ENCODE measurements at regions of chr5 and their contacts with region 1.

Region 1: GRCh38 chr5:178626484-178627258 is at the start of gene CLK4:
- DNase-seq: peak; percentile 94 to 96 (median 96)
- H3K4me3 ChIP-seq: peak within 1 kb of the TSS; percentile 63 to 97 (median 74)
- H3K4me3 Mint-ChIP-seq: peak within 1 kb of the TSS; percentile 98
- H3K27ac ChIP-seq: peak within 1 kb of the TSS; percentile 95 to 98
- H3K27ac Mint-ChIP-seq: peak within 1 kb of the TSS; percentile 97 to 99 (median 98)
- H3K4me1 ChIP-seq: peaks cover 23 to 27% of the 10 kb centered on the region in 2 donors
- H3K4me1 Mint-ChIP-seq: peaks cover 27% of the 10 kb centered on the region
- H3K27me3 ChIP-seq: no peaks in the 10 kb centered on the region
- H3K27me3 Mint-ChIP-seq: peaks cover 0 to 4% (median 3%) of the 10 kb centered on the region in 3 donors
- CTCF ChIP-seq: no peak
- polyA plus RNA-seq, gene CLK4: 3.0 to 46.9 (median 4.9) TPM

Region 2: GRCh38 chr5:178385496-178385890 is 241.2 kb before region 1 on chr5:
- intact Hi-C with region 1: no loop called
- DNase-seq: peak; percentile 16 to 90 (median 58)
- H3K4me3 ChIP-seq: no peak overlapping the region
- H3K4me3 Mint-ChIP-seq: no peak overlapping the region
- H3K27ac ChIP-seq: no peak overlapping the region
- H3K27ac Mint-ChIP-seq: peak overlapping the region in 1 of 7 donors; percentile 46
- H3K4me1 ChIP-seq: peaks cover 12 to 26% of the 10 kb centered on the region in 2 donors
- H3K4me1 Mint-ChIP-seq: peaks cover 16% of the 10 kb centered on the region
- H3K27me3 ChIP-seq: no peaks in the 10 kb centered on the region
- H3K27me3 Mint-ChIP-seq: peaks cover 0 to 4% (median 2%) of the 10 kb centered on the region in 3 donors
- CTCF ChIP-seq: no peak

Region 3: GRCh38 chr5:179530069-179530998 is 903.7 kb after region 1 on chr5:
- intact Hi-C with region 1: no loop called
- DNase-seq: peak; percentile 40 to 57 (median 42)
- H3K4me3 ChIP-seq: peak overlapping the region; percentile 41 to 82 (median 48)
- H3K4me3 Mint-ChIP-seq: peak overlapping the region; percentile 86 to 89
- H3K27ac ChIP-seq: peak overlapping the region in 1 of 2 donors; percentile 27
- H3K27ac Mint-ChIP-seq: peak overlapping the region in 4 of 7 donors; percentile 15 to 48 (median 28)
- H3K4me1 ChIP-seq: peaks cover 13 to 18% of the 10 kb centered on the region in 2 donors
- H3K4me1 Mint-ChIP-seq: peaks cover 34% of the 10 kb centered on the region
- H3K27me3 ChIP-seq: no peaks in the 10 kb centered on the region
- H3K27me3 Mint-ChIP-seq: peaks cover 3 to 6% (median 4%) of the 10 kb centered on the region in 3 donors
- CTCF ChIP-seq: peak; percentile 48

Region 4: GRCh38 chr5:179559284-179560252 is 932.9 kb after region 1 on chr5:
- intact Hi-C with region 1: loop called in 1 of 2 experiments (anchors 10 kb)
- DNase-seq: peak; percentile 92 to 98 (median 94)
- H3K4me3 ChIP-seq: peak overlapping the region; percentile 55 to 80 (median 59)
- H3K4me3 Mint-ChIP-seq: peak overlapping the region; percentile 87 to 94
- H3K27ac ChIP-seq: peak overlapping the region; percentile 52 to 77
- H3K27ac Mint-ChIP-seq: peak overlapping the region; percentile 84 to 94 (median 92)
- H3K4me1 ChIP-seq: peaks cover 8 to 12% of the 10 kb centered on the region in 2 donors
- H3K4me1 Mint-ChIP-seq: peaks cover 13% of the 10 kb centered on the region
- H3K27me3 ChIP-seq: no peaks in the 10 kb centered on the region
- H3K27me3 Mint-ChIP-seq: no peaks in the 10 kb centered on the region
- CTCF ChIP-seq: no peak

Measured in CD14-positive monocyte (primary cell).